ENCODE measurements at regions of chr10 and their contacts with region 1.

Region 1: DNA sequence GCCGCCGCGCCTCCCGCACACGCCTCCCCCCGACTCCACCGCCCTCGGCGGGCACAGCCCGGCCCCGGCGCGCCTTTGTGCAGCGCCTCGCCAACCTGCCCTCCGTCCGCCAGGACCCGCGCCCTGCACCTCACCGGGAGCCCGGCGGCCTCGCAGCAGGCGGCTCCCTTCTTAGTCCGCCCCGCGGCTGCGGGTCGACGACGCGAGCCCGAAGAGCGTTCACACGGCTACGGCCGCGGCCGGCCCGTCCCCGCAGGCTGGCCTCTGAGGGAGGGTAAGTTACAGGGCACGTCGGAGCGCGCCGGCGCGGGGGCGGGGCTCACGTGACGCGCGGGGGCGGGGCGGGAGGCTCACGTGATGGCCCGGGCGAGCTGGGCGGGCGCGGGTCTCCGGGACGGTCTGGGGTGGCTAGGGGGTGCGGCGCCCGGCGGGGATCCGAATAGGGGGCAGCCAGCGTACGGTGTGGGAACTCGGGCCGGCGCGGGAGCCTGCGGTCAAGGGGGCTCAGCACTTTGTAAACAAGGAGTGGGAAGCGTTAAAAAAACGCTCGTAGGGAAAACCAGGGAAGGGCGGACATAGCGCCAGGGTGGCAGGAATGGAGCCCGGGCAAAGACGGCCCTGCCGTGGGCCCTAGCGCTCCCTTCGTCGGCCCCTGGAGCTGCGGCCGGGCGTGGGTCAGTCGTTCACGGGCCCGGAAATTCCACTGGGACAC is at the start of gene ARHGAP12:
- DNase-seq: peak; percentile 87
- ATAC-seq: peak; percentile 52
- H3K4me3 Mint-ChIP-seq: peak within 1 kb of the TSS; percentile 84
- H3K27ac Mint-ChIP-seq: peak within 1 kb of the TSS; percentile 74
- H3K4me1 Mint-ChIP-seq: peaks cover 42% of the 10 kb centered on the region
- H3K27me3 Mint-ChIP-seq: no peaks in the 10 kb centered on the region
- total RNA-seq, gene ARHGAP12: 5.5 to 6.4 TPM

Region 2: GRCh38 chr10:31031558-31032257 is 897.0 kb before region 1 on chr10 and contains the start of gene ZNF438:
- CTCF ChIA-PET with region 1: no interaction called
- POLR2A ChIA-PET with region 1: no interaction called
- intact Hi-C with region 1: loop called in 1 of 2 experiments (anchors 2 kb)
- DNase-seq: peak; percentile 96
- ATAC-seq: peak; percentile 81
- H3K4me3 Mint-ChIP-seq: peak within 1 kb of the TSS; percentile 81
- H3K27ac Mint-ChIP-seq: peak within 1 kb of the TSS; percentile 99
- H3K4me1 Mint-ChIP-seq: peaks cover 19% of the 10 kb centered on the region
- H3K27me3 Mint-ChIP-seq: no peaks in the 10 kb centered on the region
- total RNA-seq, gene ZNF438: 3.1 to 3.7 TPM

Region 3: DNA sequence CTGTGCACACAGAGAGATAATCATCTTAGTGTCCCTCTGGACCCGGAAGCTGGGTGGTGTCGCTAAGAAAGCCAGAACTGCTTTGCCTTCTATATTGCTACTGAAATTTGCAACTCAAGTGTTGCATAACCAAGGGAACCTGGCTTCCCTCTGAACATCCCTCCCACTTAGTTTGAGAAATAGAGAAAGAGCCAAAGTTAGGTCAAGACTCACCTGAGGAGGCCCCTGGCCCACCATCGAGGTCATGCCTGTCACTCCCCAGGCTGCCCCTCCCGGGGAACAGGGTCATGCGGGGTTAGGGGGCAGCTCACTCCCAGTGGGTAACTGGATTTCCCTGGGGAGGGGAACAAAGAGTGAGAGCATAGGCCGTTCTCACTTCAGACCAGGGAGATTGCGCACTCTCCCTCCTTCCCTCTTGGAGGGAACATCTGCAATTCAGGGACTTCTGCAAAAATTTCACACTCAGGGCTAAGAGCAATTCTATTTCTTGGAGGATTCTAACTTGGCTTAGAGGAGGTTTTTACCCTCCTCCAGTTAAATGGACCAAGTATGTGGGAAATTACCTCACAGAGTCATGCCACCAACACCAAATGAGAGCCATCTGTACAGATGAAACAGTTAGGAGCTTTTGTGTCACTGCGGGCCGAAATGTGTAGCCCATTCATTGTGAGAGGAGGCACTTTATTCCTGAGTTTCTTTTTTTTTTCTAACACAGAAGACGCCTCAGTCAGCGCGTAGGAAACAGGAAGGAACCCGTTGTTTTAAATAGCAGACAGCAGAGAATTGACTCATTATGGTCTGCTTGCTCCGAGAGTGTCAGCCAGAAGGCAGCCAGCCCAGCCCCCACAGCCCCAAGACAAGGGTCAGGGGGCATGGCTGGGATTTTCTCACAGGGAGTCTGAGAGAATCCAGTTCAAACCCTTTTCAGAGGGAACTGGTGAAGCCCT is 221.3 kb before region 1 on chr10:
- CTCF ChIA-PET with region 1: no interaction called
- POLR2A ChIA-PET with region 1: no interaction called
- intact Hi-C with region 1: loop called in 1 of 2 experiments (anchors 10 kb)
- DNase-seq: peak; percentile 81
- ATAC-seq: peak; percentile 95
- H3K4me3 Mint-ChIP-seq: no peak overlapping the region
- H3K27ac Mint-ChIP-seq: peak overlapping the region; percentile 83
- H3K4me1 Mint-ChIP-seq: peaks cover 24% of the 10 kb centered on the region
- H3K27me3 Mint-ChIP-seq: no peaks in the 10 kb centered on the region

Region 4: GRCh38 chr10:31808258-31809218 is 120.2 kb before region 1 on chr10:
- CTCF ChIA-PET with region 1: no interaction called
- POLR2A ChIA-PET with region 1: no interaction called
- intact Hi-C with region 1: no loop called
- DNase-seq: peak; percentile 28
- ATAC-seq: peak; percentile 51
- H3K4me3 Mint-ChIP-seq: peak overlapping the region; percentile 22
- H3K27ac Mint-ChIP-seq: peak overlapping the region; percentile 91
- H3K4me1 Mint-ChIP-seq: peaks cover 7% of the 10 kb centered on the region
- H3K27me3 Mint-ChIP-seq: no peaks in the 10 kb centered on the region

Region 5: DNA sequence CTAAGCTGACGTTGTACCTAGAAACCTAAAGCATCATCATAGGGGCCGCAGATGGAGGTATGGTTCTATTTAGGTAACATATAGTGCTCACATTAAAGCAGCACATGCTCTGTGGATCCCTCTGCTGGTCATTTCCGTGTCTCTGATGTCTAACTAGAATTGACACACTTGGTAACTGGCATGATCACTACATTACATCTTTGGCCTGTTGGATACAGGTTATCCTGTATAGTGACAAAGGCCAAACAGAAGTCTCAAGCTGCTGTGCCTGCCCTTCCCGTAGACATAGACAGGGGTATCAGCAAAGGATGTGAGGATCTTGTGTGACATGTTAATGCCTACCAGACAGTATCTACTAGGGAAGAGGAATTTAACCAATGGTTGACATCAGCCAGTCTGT is 76.3 kb after region 1 on chr10:
- CTCF ChIA-PET with region 1: interaction called, 4 read pairs
- POLR2A ChIA-PET with region 1: no interaction called
- intact Hi-C with region 1: loop called in 1 of 2 experiments (anchors 5 kb)
- DNase-seq: peak; percentile 66
- ATAC-seq: peak; percentile 69
- H3K4me3 Mint-ChIP-seq: no peak overlapping the region
- H3K27ac Mint-ChIP-seq: peak overlapping the region; percentile 38
- H3K4me1 Mint-ChIP-seq: peaks cover 11% of the 10 kb centered on the region
- H3K27me3 Mint-ChIP-seq: no peaks in the 10 kb centered on the region

Region 6: DNA sequence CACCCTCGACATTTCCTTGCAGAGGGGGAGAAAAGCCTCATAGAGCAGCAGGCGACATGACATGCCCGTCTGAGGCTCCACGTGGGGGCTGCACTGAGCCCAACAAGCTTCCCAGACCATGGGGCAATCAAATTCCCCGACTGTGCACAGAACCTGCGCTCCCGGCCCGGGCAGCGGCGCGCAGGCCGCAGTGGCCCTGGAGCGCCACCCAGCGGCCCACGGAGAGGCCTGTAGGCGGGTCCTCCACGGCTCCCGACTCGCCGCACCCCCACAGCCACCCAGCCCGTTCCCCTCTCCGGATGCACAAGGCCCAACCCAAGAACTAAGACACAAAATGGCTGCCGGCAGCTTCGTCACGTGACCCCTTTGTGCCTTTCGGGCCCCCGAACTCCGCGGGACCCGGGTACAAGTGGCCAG is 417.4 kb after region 1 on chr10:
- CTCF ChIA-PET with region 1: no interaction called
- POLR2A ChIA-PET with region 1: no interaction called
- intact Hi-C with region 1: loop called (anchors 2 to 10 kb)
- DNase-seq: peak; percentile 98
- ATAC-seq: peak; percentile 88
- H3K4me3 Mint-ChIP-seq: peak overlapping the region; percentile 84
- H3K27ac Mint-ChIP-seq: peak overlapping the region; percentile 99
- H3K4me1 Mint-ChIP-seq: peaks cover 71% of the 10 kb centered on the region
- H3K27me3 Mint-ChIP-seq: no peaks in the 10 kb centered on the region

Region 7: DNA sequence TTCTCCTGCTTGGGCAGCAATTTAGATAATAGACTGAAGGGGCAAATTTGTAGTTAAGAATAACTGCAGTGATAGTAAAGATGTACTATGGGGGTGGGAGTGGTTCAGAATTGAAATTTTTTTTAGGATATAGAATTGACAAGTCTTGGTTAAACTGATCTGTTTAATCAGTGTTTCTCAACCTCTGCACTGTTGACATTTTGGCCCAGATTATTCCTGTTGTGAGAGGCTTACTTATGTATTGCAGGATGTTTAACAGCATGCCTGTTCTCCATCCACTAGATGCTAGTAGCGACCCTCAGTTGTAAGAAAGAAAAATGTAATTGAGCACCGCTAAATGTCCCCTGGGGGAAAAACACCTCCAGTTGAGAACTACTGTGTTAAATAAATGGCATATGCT is 693.7 kb after region 1 on chr10:
- CTCF ChIA-PET with region 1: no interaction called
- POLR2A ChIA-PET with region 1: no interaction called
- intact Hi-C with region 1: no loop called
- DNase-seq: no peak
- ATAC-seq: no peak
- H3K4me3 Mint-ChIP-seq: no peak overlapping the region
- H3K27ac Mint-ChIP-seq: no peak overlapping the region
- H3K4me1 Mint-ChIP-seq: no peaks in the 10 kb centered on the region
- H3K27me3 Mint-ChIP-seq: no peaks in the 10 kb centered on the region